ENCODE measurements at regions of chr17 and their contacts with region 1.

Region 1: GRCh38 chr17:57955183-57955931 is at the start of gene CUEDC1:
- DNase-seq: peak; percentile 73 to 85 (median 83)
- H3K4me3 ChIP-seq: peak within 1 kb of the TSS; percentile 70
- H3K27ac ChIP-seq: peak within 1 kb of the TSS; percentile 72 to 83
- H3K4me1 ChIP-seq: peaks cover 6% of the 10 kb centered on the region
- H3K27me3 ChIP-seq: no peaks in the 10 kb centered on the region
- CTCF ChIP-seq: peak in 2 of 3 donors; percentile 34 to 36
- EP300 ChIP-seq: no peak
- POLR2A ChIP-seq: no peak
- total RNA-seq, gene CUEDC1: 6.7 to 30.2 (median 22.9) TPM

Region 2: DNA sequence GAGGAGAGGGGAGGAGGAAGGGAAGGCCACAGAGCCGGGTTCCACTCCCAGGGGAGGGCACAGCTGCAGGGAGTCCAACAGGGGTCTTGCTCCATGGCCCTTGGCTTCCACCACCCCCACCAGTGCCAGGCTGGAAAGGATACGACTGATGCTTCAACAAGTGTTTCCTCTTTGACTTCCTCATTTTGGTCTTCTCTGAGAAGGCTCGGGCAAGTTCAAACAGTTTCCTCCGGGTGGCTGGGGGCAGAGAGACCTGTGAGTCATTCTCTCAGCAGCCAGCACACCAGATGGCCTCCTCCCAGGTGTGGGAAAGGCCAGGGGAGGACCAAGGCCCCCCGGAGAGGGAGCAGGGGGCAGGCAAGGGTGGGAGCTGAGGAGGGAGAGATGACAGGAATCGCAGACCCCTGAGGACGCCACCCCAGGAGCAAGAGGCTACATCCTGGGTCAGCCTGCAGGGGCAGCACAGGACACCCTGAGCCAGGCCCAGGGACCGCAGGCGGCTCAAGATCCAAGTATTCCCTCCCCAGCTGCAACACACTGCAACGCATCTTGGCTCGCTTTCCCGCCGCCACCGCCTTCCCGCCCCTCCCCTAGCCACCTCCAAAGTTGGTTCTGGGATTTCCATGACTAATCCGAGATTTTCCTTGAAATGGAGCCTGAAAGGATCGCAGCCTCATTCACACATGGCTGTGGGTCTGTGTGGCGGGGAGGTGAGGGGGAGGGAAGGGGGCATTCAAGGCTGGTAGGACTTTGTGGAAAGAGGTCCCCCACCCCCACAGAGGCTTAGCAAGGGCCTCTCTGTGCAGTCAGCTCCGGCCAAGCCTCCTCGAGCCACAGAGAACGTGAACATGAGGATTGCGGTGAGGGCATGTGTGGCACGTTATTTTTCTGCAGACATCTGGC is 87.1 kb before region 1 on chr17:
- intact Hi-C with region 1: loop called in 2 of 4 experiments (anchors 5 kb)
- DNase-seq: peak; percentile 82 to 88 (median 86)
- H3K4me3 ChIP-seq: no peak overlapping the region
- H3K27ac ChIP-seq: peak overlapping the region; percentile 27 to 66
- H3K4me1 ChIP-seq: peaks cover 8% of the 10 kb centered on the region
- H3K27me3 ChIP-seq: no peaks in the 10 kb centered on the region
- CTCF ChIP-seq: peak in 2 of 3 donors; percentile 50 to 53
- EP300 ChIP-seq: no peak
- POLR2A ChIP-seq: no peak

Region 3: DNA sequence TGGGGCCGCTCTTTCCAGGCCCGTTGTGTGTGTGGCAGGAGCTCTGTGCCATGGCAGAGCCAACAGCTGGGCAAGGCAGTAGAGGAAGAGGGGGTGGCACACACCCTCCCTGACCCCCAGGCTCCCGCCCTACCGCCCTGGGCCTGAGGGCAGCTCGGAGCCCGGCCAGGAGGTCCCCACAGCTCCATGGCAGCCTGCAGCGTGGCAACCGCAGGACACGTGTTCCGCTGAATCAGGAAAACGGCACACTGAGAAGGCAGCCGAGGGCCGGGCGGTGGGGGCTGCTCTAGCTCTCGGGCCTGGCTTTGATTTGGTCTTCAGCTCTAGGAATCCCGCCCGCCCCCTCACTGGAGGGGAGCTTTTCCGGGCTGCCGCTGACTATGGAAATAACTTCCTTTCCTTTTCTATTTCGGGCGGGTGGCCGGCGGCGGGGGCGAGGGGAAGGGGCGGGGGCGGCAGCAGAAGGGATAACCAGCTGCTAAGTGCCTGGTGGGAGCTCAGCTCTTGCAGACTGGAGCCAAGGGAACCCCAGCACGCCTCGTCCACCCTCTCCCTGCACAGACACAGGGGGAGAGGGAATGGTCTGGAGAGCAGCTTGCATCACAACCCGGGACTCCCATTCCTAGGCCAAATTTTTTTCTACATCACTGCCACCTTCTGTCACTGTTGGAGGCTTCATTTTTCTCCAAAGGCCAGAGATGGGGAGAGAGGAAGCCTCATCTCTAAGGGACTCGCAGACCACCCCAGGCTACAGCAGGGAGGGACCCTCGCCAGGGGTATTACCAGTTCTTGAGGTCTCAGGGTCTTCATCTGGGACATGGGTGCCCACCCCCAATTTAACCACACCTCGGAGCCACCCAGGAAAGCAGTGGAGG is 80.7 kb before region 1 on chr17:
- intact Hi-C with region 1: loop called in 2 of 4 experiments (anchors 5 kb)
- DNase-seq: peak; percentile 78 to 86 (median 81)
- H3K4me3 ChIP-seq: peak overlapping the region; percentile 23
- H3K27ac ChIP-seq: peak overlapping the region; percentile 47 to 78
- H3K4me1 ChIP-seq: peaks cover 22% of the 10 kb centered on the region
- H3K27me3 ChIP-seq: no peaks in the 10 kb centered on the region
- CTCF ChIP-seq: no peak
- EP300 ChIP-seq: no peak
- POLR2A ChIP-seq: no peak